ENCODE measurements at regions of chr15 and their contacts with region 1.

Region 1: DNA sequence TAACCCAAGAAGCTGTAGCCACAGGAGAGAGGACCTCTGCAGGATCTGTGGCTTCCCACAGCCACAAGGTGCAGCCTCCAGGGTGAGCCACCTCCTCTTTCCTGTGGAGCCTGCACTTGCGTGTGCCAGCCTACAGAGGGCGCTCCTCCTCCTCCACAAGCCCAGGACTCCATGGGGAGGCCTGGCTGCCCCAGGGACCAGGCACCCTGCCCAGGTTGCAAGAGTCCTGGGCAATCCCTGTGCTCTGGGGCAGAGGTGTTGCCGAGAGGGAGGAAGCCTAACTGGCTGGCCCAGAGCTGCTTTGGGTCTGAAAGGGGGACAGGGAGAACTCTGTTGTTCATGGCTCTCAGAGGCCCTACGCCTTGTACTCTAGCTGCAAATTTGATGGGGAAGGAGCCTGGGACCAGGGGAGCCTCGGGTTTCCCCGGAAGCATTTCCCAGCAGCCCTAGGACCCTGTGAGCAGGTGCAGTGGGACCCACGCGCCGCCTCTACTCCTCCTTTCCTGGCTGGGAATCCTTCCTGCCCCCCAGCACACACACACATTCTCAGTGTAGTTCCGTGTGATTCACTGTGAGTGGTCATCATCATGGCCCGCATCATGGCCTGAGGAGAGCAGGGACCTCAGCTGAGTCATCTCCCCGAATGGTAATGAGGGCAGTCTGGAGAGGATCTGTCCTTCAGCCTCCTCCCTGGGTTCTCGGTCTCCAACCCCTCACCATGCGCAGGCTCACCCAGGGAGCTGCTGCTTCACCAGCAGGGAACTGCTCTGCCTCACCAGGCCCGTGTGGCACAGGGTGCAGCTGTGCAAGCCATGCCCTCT is 24.3 kb downstream of the TBC1D21 start:
- DNase-seq: peak; percentile 40
- H3K4me3 ChIP-seq: no peak overlapping the region
- CTCF ChIP-seq: peak; percentile 100

Region 2: DNA sequence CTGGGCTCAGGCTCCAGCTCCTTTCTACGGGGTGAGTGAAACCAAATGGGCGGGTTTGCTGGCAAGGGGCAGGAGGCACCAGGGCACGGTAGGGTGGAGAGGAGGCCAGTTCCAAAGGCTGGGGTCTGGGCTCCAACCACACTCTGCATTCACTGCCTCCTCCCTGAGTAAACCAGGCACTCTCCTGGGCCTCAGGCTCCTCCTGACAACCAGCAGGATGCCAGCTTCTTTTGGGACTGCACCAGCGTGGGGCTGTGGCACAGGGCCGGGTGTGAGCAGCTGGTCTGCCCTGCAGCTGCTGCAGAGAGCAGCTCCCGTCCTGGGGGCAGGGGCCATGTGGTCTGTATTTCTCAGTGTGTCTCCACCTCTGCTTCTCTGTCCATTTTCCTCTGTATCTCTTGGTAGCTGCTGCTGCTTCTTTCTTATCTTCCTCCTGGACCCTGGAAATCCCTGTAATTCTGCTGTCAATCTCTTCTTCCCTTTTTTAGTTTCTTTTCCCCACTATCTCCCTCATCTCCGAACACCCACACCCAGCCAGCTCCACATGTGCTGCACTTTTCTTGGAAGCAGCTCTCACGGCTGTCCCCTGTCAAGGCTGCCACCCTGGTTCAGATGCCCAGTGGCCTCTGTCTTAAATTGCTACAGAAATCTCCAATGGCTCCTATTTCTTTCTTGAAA is 79.2 kb before region 1 on chr15:
- CTCF ChIA-PET with region 1: no interaction called
- POLR2A ChIA-PET with region 1: no interaction called
- DNase-seq: no peak
- H3K4me3 ChIP-seq: no peak overlapping the region
- CTCF ChIP-seq: no peak

Region 3: DNA sequence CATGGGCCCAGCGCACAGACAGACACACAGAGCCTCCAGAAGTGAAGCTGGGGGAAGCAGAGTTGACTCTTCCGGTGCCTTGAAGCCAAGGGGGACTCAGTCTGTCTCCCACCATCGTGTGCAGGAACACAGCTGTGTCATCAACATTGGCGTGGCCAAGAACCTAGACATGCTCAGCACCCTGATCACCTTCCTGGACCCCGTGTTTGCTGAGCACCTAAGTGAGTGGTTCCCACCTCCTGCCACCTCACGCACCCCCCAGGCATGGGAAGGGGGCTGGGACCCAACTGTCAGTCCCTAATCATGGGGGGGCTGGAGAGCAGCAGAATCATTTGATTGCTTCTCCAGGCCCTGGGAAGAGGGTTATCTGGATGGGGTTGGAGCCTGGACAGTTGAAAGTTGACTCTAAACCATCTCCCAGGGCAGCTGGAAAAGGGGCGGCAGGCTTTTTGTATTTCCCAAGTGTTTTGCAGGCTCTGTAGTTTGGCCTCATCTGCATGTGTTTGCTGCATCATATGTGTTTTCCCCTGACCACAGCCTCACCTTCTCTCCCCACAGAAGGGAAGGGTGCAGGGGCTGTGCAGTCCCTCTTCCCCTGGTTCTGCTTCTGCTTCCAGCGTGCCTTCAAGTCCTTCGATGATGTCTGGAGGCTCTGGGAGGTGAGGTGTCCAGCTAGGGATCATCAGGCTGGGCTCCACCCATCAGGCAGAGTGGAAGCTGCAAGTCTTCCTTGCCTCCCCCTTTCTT is 11.5 kb before region 1 on chr15:
- CTCF ChIA-PET with region 1: interaction called, 16 read pairs
- POLR2A ChIA-PET with region 1: interaction called, 3 read pairs
- DNase-seq: no peak
- H3K4me3 ChIP-seq: no peak overlapping the region
- CTCF ChIP-seq: no peak

Measured in AG04449 (cell line).